ENCODE measurements at regions of chr7 and their contacts with region 1.

Region 1: GRCh38 chr7:99910976-99911375 is 8.4 kb downstream of the TRIM4 start:
- DNase-seq: no peak
- H3K4me3 ChIP-seq: no peak overlapping the region
- H3K27ac ChIP-seq: no peak overlapping the region
- H3K4me1 ChIP-seq: no peaks in the 10 kb centered on the region
- H3K27me3 ChIP-seq: no peaks in the 10 kb centered on the region
- CTCF ChIP-seq: no peak
- POLR2A ChIP-seq: no peak

Region 2: GRCh38 chr7:99928994-99929729 is 18.2 kb after region 1 on chr7 and contains the start of gene GJC3:
- CTCF ChIA-PET with region 1: interaction called, 14 read pairs
- POLR2A ChIA-PET with region 1: no interaction called
- dilution Hi-C with region 1: no loop called
- intact Hi-C with region 1: no loop called
- DNase-seq: peak; percentile 80
- H3K4me3 ChIP-seq: peak within 1 kb of the TSS in 2 of 3 experiments; percentile 14 to 39
- H3K27ac ChIP-seq: no peak within 1 kb of the TSS
- H3K4me1 ChIP-seq: peaks cover 13% of the 10 kb centered on the region
- H3K27me3 ChIP-seq: peaks cover 12 to 29% of the 10 kb centered on the region in 2 experiments
- CTCF ChIP-seq: peak; percentile 22 to 41
- POLR2A ChIP-seq: peak; percentile 41
- total RNA-seq, gene GJC3: not detected in 2 replicates

Region 3: GRCh38 chr7:99949638-99950228 is 38.8 kb after region 1 on chr7:
- CTCF ChIA-PET with region 1: interaction called, 8 read pairs
- POLR2A ChIA-PET with region 1: no interaction called
- dilution Hi-C with region 1: no loop called
- intact Hi-C with region 1: loop called (anchors 1 kb)
- DNase-seq: peak; percentile 56
- H3K4me3 ChIP-seq: no peak overlapping the region
- H3K27ac ChIP-seq: no peak overlapping the region
- H3K4me1 ChIP-seq: no peaks in the 10 kb centered on the region
- H3K27me3 ChIP-seq: peaks cover 3 to 4% of the 10 kb centered on the region in 2 experiments
- CTCF ChIP-seq: peak; percentile 11 to 34
- POLR2A ChIP-seq: no peak

Region 4: DNA sequence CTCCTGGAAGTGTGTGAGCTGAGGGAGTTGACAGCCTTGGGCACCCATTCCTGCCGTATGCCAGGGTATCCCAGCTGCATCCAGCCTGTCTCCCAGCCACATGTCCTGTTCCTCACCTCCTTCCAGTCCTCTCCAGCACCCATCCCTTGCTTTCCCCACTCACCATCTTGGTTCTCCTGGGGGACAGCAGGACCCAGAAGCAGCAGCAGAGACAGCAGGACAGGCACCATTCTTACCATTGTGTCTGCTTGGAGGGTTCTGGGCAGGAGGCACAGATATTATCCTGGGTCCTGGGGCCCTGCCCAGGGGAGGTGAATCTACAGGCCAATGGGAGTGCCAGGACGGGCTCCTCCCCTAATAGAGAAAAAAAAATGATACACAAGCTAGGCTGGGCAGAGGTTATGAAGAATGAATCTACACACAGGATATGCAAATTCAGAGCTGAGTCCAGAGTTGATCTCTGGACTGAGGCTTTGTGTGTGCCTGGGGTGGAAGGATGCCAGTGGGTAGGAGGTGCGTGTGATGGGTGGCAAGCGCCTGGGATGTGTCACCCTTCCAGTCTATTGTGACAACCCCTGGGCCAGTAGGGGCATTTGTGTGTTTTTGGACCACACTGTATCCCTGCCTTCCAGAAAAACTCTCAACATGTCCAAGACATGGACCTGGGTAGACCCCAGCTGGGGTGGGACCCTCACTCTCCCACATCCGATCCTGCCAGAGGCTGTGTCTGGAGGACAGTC is 65.0 kb after region 1 on chr7 and contains the start of gene AZGP1:
- CTCF ChIA-PET with region 1: interaction called, 12 read pairs
- POLR2A ChIA-PET with region 1: no interaction called
- dilution Hi-C with region 1: no loop called
- intact Hi-C with region 1: loop called (anchors 1 kb)
- DNase-seq: no peak
- H3K4me3 ChIP-seq: no peak within 1 kb of the TSS
- H3K27ac ChIP-seq: no peak within 1 kb of the TSS
- H3K4me1 ChIP-seq: no peaks in the 10 kb centered on the region
- H3K27me3 ChIP-seq: peaks cover 0 to 5% of the 10 kb centered on the region in 2 experiments
- CTCF ChIP-seq: no peak
- POLR2A ChIP-seq: no peak
- total RNA-seq, gene AZGP1: not detected in 2 replicates

Region 5: GRCh38 chr7:100101016-100101862 is 190.3 kb after region 1 on chr7 and contains the starts of genes AP4M1 and MCM7:
- CTCF ChIA-PET with region 1: no interaction called
- POLR2A ChIA-PET with region 1: no interaction called
- dilution Hi-C with region 1: no loop called
- intact Hi-C with region 1: no loop called
- DNase-seq: peak; percentile 98
- H3K4me3 ChIP-seq: peak within 1 kb of the TSS; percentile 74 to 96 (median 75)
- H3K27ac ChIP-seq: peak within 1 kb of the TSS; percentile 84
- H3K4me1 ChIP-seq: peaks cover 18% of the 10 kb centered on the region
- H3K27me3 ChIP-seq: no peaks in the 10 kb centered on the region
- CTCF ChIP-seq: no peak
- POLR2A ChIP-seq: peak; percentile 38
- total RNA-seq, gene AP4M1: 20.5 and 22.7 TPM in 2 replicates
- total RNA-seq, gene MCM7: 183 and 187 TPM in 2 replicates

Measured in endothelial cell of umbilical vein (primary cell).